A673 (cell line): ENCODE measurements at regions of chr17 and their contacts with region 1.

Region 1: DNA sequence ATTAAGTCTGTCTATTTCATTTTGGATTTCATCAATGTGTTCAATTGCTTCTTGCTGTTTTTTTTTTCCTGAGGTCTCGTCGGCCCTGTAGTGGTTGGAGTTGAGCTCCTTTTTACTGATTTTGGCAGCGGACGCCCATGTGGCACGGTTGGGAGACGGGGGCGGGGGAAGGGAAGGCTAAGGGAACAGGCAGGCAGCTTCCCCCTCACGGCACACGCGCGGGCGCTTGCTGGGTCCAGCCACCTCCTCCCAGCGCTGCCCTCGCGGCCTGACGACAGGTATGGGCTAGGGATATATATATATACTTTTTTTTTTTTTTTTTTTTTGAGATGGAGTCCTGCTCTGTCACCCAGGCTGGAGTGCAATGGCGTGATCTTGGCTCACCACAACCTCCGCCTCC is 11.4 kb downstream of the HSF5 start:
- DNase-seq: no peak
- H3K4me3 ChIP-seq: no peak overlapping the region
- H3K27ac ChIP-seq: no peak overlapping the region
- H3K4me1 ChIP-seq: no peaks in the 10 kb centered on the region
- H3K27me3 ChIP-seq: no peaks in the 10 kb centered on the region
- CTCF ChIP-seq: no peak

Region 2: DNA sequence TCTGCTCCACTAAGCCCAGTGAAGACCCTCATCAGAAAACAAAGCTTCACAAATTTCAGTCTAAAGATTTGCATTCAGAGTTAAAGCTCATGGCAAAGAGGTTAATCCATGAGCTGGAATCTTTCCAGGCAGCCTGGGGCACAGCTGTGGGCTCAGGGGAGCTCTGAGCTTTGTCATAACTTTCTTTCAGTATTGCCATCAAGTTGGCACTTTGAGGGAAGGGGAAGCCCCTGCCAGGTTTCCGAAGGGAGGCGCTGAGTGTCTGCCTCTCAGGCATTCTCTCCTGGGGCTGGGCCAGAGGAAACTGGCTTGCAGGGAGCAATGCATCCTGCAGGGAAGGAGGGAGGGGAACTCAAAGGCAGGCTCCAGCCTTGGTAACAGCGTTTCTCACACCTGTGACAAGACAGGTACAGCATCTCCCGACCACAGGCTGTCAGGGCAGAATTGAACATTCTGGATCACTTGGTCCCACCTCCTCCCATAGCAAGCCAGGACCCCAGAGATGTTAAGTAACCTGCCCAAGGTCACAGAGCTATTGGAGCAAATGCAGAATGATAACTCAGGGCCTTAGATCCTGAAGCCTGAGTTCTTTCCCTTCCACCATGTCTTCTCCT is 234.5 kb before region 1 on chr17:
- CTCF ChIA-PET with region 1: no interaction called
- POLR2A ChIA-PET with region 1: interaction called, 13 read pairs
- intact Hi-C with region 1: no loop called
- DNase-seq: peak; percentile 44
- H3K4me3 ChIP-seq: no peak overlapping the region
- H3K27ac ChIP-seq: no peak overlapping the region
- H3K4me1 ChIP-seq: no peaks in the 10 kb centered on the region
- H3K27me3 ChIP-seq: peaks cover 11% of the 10 kb centered on the region
- CTCF ChIP-seq: no peak